ENCODE measurements at regions of chr14 and their contacts with region 1.

Region 1: GRCh38 chr14:22852940-22853767 is 16.8 kb downstream of the MMP14 start:
- DNase-seq: peak; percentile 83
- ATAC-seq: peak; percentile 66
- H3K4me3 ChIP-seq: peak overlapping the region; percentile 38
- H3K27ac ChIP-seq: peak overlapping the region; percentile 77
- H3K4me1 ChIP-seq: peaks cover 30% of the 10 kb centered on the region
- H3K27me3 ChIP-seq: no peaks in the 10 kb centered on the region
- CTCF ChIP-seq: peak; percentile 95
- POLR2A ChIP-seq: peak; percentile 54; the same call in 1 of the 2 replicates
- RAD21 ChIP-seq: peak; percentile 98

Region 2: DNA sequence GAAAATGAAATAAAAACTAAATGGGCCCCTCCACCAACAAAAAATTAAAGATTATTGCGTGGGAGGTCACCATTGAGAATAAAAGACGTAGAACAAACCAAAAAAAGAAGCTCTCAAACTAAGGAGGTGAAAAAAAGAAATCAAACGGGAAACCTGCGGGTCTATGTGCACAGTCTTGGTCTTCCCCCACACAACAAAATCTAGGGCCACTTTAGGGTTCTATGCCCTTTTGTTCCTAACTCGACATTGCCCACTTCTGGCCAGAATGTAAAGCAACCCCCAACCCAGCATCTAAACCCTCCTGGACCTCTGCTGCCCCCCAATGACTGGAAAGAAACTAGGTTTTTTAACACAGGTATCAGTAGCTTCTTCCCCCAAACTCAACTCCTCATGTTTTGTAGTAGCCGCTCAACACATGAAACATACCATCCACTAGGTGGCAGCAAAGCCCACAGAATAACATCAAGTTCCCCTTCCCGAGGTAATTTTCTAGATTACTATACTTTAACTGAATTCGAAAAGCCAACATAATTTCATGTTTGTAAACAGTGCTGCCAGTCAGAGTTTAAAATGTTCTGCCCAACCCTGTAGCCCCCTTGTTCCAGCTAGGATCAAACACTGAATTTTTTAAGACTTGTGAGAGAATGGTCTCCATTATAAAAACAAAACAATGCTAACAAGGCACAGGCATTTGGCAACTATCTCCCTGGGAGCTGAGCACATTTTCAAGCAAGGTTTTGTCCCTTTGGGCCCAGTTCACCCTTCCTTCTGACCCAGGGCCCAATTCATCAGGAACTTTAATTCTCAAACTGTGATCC is 282.8 kb before region 1 on chr14:
- CTCF ChIA-PET with region 1: interaction called, 9 read pairs
- POLR2A ChIA-PET with region 1: no interaction called
- dilution Hi-C with region 1: no loop called
- in situ Hi-C with region 1: loop called (anchors 5 kb)
- intact Hi-C with region 1: loop called (anchors 1 kb)
- DNase-seq: peak; percentile 82
- ATAC-seq: peak; percentile 69
- H3K4me3 ChIP-seq: no peak overlapping the region
- H3K27ac ChIP-seq: no peak overlapping the region
- H3K4me1 ChIP-seq: peaks cover 8% of the 10 kb centered on the region
- H3K27me3 ChIP-seq: no peaks in the 10 kb centered on the region
- CTCF ChIP-seq: peak; percentile 77
- POLR2A ChIP-seq: no peak
- RAD21 ChIP-seq: peak; percentile 84

Region 3: GRCh38 chr14:22653012-22653621 is 200.0 kb before region 1 on chr14:
- CTCF ChIA-PET with region 1: no interaction called
- POLR2A ChIA-PET with region 1: no interaction called
- dilution Hi-C with region 1: no loop called
- in situ Hi-C with region 1: no loop called
- intact Hi-C with region 1: loop called (anchors 1 kb)
- DNase-seq: peak; percentile 74
- ATAC-seq: peak; percentile 97
- H3K4me3 ChIP-seq: no peak overlapping the region
- H3K27ac ChIP-seq: no peak overlapping the region
- H3K4me1 ChIP-seq: no peaks in the 10 kb centered on the region
- H3K27me3 ChIP-seq: 0 out of 2 replicates have a peak, but pooled peaks cover 1% of the 10 kb centered on the region
- CTCF ChIP-seq: peak; percentile 95
- POLR2A ChIP-seq: 0 out of 2 replicates have a peak, but pooled peaks have one; percentile 23
- RAD21 ChIP-seq: peak; percentile 93

Region 4: GRCh38 chr14:22822571-22823098 is 30.5 kb before region 1 on chr14:
- CTCF ChIA-PET with region 1: interaction called, 60 read pairs
- POLR2A ChIA-PET with region 1: interaction called, 5 read pairs
- dilution Hi-C with region 1: no loop called
- in situ Hi-C with region 1: no loop called
- intact Hi-C with region 1: loop called (anchors 1 kb)
- DNase-seq: peak; percentile 86
- ATAC-seq: peak; percentile 73
- H3K4me3 ChIP-seq: peak overlapping the region; percentile 12; the same call in 1 of the 2 replicates
- H3K27ac ChIP-seq: peak overlapping the region; percentile 76
- H3K4me1 ChIP-seq: peaks cover 30% of the 10 kb centered on the region
- H3K27me3 ChIP-seq: no peaks in the 10 kb centered on the region
- CTCF ChIP-seq: peak; percentile 94
- POLR2A ChIP-seq: peak; percentile 34; the same call in 1 of the 2 replicates
- RAD21 ChIP-seq: peak; percentile 90

Region 5: DNA sequence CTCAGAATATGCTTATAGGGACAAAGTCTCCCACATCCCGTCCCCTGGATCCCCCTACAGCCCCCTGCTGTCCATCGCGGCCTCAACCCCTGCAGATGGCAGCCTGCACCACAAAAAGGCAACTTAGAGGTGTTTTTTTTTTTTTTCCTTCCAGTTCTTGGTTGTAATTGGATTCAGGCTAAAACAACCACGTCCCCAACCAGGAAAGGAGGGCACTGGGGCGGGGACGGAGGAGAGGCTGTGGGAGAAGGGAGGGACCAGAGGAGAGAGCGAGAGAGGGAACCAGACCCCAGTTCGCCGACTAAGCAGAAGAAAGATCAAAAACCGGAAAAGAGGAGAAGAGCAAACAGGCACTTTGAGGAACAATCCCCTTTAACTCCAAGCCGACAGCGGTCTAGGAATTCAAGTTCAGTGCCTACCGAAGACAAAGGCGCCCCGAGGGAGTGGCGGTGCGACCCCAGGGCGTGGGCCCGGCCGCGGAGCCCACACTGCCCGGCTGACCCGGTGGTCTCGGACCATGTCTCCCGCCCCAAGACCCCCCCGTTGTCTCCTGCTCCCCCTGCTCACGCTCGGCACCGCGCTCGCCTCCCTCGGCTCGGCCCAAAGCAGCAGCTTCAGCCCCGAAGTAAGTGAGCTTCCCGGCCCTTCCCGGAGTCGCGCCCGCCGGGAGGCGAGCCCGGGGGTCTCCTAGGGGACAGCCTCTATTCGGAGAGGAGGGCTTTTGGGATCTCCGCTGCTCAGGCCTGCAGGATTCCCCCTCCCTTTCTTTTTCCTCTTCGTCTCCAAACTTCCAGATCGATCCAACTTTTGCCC is 16.6 kb before region 1 on chr14 and contains the start of gene MMP14:
- CTCF ChIA-PET with region 1: interaction called, 9 read pairs
- POLR2A ChIA-PET with region 1: interaction called, 25 read pairs
- dilution Hi-C with region 1: no loop called
- in situ Hi-C with region 1: no loop called
- intact Hi-C with region 1: loop called (anchors 1 kb)
- DNase-seq: peak; percentile 89
- ATAC-seq: peak; percentile 77
- H3K4me3 ChIP-seq: peak within 1 kb of the TSS; percentile 64
- H3K27ac ChIP-seq: peak within 1 kb of the TSS; percentile 96
- H3K4me1 ChIP-seq: peaks cover 13% of the 10 kb centered on the region
- H3K27me3 ChIP-seq: no peaks in the 10 kb centered on the region
- CTCF ChIP-seq: peak; percentile 68
- POLR2A ChIP-seq: peak; percentile 88
- RAD21 ChIP-seq: peak; percentile 61
- total RNA-seq, gene MMP14: 124 and 156 TPM in 2 replicates

Measured in IMR-90 (cell line).